Pancreas (tissue), 10 donors: ENCODE measurements at regions of chr19 and their contacts with region 1.

Region 1: DNA sequence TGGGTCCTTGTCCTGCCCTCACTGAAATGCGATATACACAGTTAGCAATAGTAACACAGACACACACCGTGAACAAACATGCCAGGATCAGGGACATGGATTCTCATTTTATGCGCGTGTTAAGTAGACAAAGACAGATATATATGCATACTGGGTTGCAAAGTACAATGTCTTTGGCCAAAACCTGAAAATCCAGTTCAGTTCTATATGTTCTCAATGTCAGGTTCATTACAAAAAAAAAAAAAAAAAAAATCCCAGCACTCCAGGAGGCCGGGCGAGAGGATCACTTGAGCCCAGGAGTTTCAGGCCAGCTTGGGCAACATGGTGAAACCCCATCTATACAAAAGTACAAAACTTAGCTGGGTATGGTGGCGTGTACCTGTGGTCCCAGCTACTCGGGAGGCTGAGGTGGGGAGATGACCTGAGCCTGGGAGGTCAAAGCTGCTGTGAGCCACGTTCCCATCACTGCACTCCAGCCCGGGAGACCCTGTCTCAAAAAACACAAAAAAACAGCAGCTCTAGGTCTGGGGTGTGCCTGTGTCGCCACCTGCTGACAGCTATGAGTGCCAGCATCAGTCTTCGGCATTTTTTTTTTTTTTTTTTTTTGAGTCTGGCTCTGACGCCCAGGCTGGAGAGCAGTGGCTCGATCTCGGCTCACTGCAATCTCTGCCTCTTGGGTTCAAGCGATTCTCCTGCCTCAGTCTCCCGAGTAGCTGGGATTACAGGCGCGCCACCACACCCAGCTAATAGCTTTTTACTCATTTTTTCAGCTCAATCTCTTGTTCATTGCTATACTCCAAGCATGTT is 10.3 kb downstream of the AP2S1 start:
- DNase-seq: no peak
- ATAC-seq: peak; percentile 68 to 90 (median 80)
- H3K4me3 ChIP-seq: no peak overlapping the region
- H3K27ac ChIP-seq: no peak overlapping the region
- H3K4me1 ChIP-seq: no peaks in the 10 kb centered on the region
- H3K27me3 ChIP-seq: no peaks in the 10 kb centered on the region
- CTCF ChIP-seq: peak; percentile 49 to 71 (median 64)

Region 2: GRCh38 chr19:46753420-46754155 is 86.8 kb before region 1 on chr19:
- intact Hi-C with region 1: loop called (anchors 2 to 10 kb)
- DNase-seq: peak; percentile 54 to 79 (median 72)
- ATAC-seq: peak; percentile 36 to 76 (median 74)
- H3K4me3 ChIP-seq: no peak overlapping the region
- H3K27ac ChIP-seq: no peak overlapping the region
- H3K4me1 ChIP-seq: no peaks in the 10 kb centered on the region
- H3K27me3 ChIP-seq: no peaks in the 10 kb centered on the region
- CTCF ChIP-seq: peak in 1 of 4 donors; percentile 20

Region 3: DNA sequence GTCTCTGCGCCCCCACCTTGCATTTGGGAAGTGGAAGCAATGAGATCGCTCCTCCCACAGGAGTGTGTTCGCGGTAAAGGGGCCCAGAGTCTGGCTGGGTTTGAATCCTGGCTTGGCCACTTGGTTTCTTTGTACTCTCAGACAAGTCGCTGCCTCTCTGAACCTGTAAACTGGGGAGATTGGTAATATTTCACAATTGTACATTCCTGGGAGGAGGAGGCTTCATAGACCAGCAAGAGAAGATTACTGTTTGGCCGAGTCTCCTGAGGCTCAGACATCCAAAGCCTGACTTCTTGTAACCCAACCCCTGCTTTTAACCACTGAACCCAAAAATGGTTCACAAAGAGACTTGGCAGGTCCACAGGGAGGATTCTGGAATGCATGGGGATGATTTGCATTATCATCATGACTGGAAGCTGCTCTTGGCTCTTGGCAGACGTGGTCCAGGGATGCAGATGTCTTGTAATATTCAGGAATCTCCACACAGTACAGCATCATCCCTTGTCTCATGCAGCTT is 80.5 kb before region 1 on chr19:
- intact Hi-C with region 1: loop called (anchors 2 to 10 kb)
- DNase-seq: no peak
- ATAC-seq: peak in 2 of 4 donors; percentile 6 to 24
- H3K4me3 ChIP-seq: no peak overlapping the region
- H3K27ac ChIP-seq: no peak overlapping the region
- H3K4me1 ChIP-seq: no peaks in the 10 kb centered on the region
- H3K27me3 ChIP-seq: no peaks in the 10 kb centered on the region
- CTCF ChIP-seq: no peak

Region 4: GRCh38 chr19:46803555-46803954 is 36.8 kb before region 1 on chr19:
- intact Hi-C with region 1: no loop called
- DNase-seq: no peak
- ATAC-seq: no peak
- H3K4me3 ChIP-seq: no peak overlapping the region
- H3K27ac ChIP-seq: no peak overlapping the region
- H3K4me1 ChIP-seq: no peaks in the 10 kb centered on the region
- H3K27me3 ChIP-seq: no peaks in the 10 kb centered on the region
- CTCF ChIP-seq: no peak